ENCODE measurements at regions of chr17 and their contacts with region 1.

Region 1: DNA sequence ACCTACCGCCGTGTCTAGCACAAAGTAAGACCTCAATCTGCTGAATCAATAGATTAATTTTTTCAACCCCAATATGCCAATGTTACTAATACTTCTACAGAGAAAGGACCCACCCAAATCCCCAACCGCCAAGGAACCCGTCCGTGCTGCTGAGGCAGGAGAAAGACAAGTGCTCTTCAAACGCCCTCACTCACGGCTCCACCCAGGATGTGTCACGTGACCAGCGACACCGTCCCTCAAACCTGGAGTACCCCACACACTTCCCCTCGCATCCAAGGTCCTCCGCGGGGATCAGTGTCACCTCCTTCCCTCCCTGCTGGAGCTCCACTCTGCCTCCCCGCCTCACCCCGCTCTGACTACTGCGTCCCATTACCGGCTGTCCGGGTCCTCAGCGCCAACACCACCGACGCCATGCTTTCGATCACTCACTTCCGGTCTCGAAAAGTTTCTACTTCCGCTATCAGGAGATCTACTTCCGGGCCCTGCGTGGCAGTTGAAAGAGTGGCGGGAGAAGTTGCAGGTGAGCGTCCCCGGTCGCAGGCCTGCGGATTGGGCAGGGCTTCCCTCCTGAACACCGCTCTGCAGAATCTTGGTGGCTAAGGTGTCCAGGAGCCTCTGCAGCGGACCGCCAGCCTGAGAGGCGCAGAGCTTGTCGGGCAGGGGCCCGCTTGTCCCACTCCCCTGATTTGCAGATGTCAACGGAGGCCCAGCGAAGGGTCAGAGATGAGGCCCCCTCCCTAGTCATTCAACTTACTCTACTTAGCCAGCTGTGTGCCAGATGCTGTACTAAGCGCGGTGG is at the starts of genes EME1 and MRPL27:
- DNase-seq: peak; percentile 89
- H3K4me3 Mint-ChIP-seq: peak within 1 kb of the TSS; percentile 97
- H3K27ac Mint-ChIP-seq: peak within 1 kb of the TSS; percentile 97
- H3K4me1 Mint-ChIP-seq: peaks cover 39% of the 10 kb centered on the region
- H3K27me3 Mint-ChIP-seq: no peaks in the 10 kb centered on the region
- total RNA-seq, gene EME1: 25.1 to 26.1 TPM
- total RNA-seq, gene MRPL27: 56.5 to 57.5 TPM

Region 2: GRCh38 chr17:50297407-50297865 is 75.5 kb before region 1 on chr17:
- CTCF ChIA-PET with region 1: no interaction called
- POLR2A ChIA-PET with region 1: no interaction called
- DNase-seq: peak; percentile 82
- H3K4me3 Mint-ChIP-seq: no peak overlapping the region
- H3K27ac Mint-ChIP-seq: no peak overlapping the region
- H3K4me1 Mint-ChIP-seq: peaks cover 13% of the 10 kb centered on the region
- H3K27me3 Mint-ChIP-seq: peaks cover 2% of the 10 kb centered on the region

Region 3: GRCh38 chr17:50345432-50346312 is 27.3 kb before region 1 on chr17 and contains the start of gene XYLT2:
- CTCF ChIA-PET with region 1: no interaction called
- POLR2A ChIA-PET with region 1: interaction called, 27 read pairs
- DNase-seq: peak; percentile 93
- H3K4me3 Mint-ChIP-seq: peak within 1 kb of the TSS; percentile 89
- H3K27ac Mint-ChIP-seq: peak within 1 kb of the TSS; percentile 90
- H3K4me1 Mint-ChIP-seq: peaks cover 39% of the 10 kb centered on the region
- H3K27me3 Mint-ChIP-seq: no peaks in the 10 kb centered on the region
- total RNA-seq, gene XYLT2: 26.7 to 29.7 TPM

Region 4: GRCh38 chr17:50425682-50426471 is 52.9 kb after region 1 on chr17 and contains the start of gene ACSF2:
- CTCF ChIA-PET with region 1: no interaction called
- POLR2A ChIA-PET with region 1: interaction called, 16 read pairs
- DNase-seq: peak; percentile 82
- H3K4me3 Mint-ChIP-seq: peak within 1 kb of the TSS; percentile 84
- H3K27ac Mint-ChIP-seq: peak within 1 kb of the TSS; percentile 75
- H3K4me1 Mint-ChIP-seq: peaks cover 33% of the 10 kb centered on the region
- H3K27me3 Mint-ChIP-seq: no peaks in the 10 kb centered on the region
- total RNA-seq, gene ACSF2: 28.7 to 30.7 TPM

Region 5: DNA sequence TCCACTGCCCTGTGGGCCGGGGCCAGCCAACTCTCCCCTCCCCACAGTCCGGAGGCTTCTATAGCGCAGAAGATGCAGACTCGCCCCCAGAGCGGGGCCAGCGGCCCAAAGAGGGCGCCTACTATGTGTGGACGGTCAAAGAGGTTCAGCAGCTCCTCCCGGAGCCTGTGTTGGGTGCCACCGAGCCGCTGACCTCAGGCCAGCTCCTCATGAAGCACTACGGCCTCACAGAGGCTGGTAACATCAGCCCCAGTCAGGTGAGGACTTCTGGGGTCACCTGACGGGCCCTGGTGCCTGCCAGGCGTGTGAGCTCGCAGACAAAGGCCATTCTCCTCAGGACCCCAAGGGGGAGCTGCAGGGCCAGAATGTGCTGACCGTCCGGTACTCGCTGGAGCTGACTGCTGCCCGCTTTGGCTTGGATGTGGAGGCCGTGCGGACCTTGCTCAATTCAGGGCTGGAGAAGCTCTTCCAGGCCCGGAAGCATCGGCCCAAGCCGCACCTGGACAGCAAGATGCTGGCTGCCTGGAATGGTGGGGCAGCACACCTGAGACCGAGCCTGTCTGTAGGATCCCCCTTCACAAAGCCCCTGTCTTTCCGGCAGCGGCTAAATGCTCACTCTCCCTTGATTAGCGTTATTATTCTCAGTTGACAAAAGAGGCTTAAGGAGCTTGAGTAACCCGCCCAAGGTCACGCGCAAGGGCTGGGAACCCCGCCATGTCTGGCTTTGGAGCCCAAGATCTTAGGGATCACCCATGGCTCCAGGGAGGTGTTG is 177.9 kb after region 1 on chr17:
- CTCF ChIA-PET with region 1: no interaction called
- POLR2A ChIA-PET with region 1: no interaction called
- DNase-seq: no peak
- H3K4me3 Mint-ChIP-seq: no peak overlapping the region
- H3K27ac Mint-ChIP-seq: no peak overlapping the region
- H3K4me1 Mint-ChIP-seq: peaks cover 9% of the 10 kb centered on the region
- H3K27me3 Mint-ChIP-seq: peaks cover 5% of the 10 kb centered on the region

Region 6: DNA sequence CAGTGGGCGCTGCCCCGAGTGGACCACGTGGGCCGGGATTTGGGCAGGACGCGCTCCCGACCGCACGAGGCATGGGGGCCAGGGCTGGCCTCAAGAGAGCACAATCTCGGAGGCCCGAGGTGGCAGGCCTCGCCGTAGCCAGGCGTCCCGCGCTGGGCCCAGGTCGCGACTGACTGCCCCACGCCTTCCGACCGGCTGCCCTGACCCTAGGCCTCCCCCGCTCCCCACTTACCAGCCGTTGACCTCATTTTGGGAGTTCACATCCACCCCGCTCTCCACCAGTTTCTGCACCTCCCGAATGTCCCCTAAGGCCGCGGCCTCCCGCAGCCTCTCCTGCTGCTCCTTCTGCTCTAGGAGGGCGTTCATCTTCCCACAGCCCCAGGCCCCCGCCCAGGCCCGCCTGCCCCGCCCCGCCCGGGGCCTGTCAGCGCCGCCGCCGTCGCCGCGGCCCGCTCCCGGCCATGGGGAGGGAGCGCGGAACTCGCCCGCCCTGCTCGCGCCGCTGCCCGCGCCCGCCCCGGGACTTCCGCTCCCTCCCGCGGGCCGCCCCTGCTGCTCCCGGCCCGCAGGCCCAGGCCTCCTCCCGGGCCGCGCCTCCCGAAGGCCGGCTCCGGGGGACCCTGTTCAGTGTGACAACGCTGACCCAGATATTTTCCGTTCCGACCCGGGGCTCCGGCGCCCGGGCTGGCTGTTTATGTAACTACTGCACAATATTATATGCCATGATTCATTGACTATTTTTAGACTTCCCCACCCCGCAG is 334.5 kb after region 1 on chr17 and contains the start of gene ANKRD40:
- CTCF ChIA-PET with region 1: no interaction called
- POLR2A ChIA-PET with region 1: interaction called, 10 read pairs
- DNase-seq: peak; percentile 93
- H3K4me3 Mint-ChIP-seq: peak within 1 kb of the TSS; percentile 83
- H3K27ac Mint-ChIP-seq: peak within 1 kb of the TSS; percentile 96
- H3K4me1 Mint-ChIP-seq: peaks cover 47% of the 10 kb centered on the region
- H3K27me3 Mint-ChIP-seq: peaks cover 2% of the 10 kb centered on the region
- total RNA-seq, gene ANKRD40: 29.8 to 31.1 TPM

Measured in activated CD4-positive, alpha-beta memory T cell treated with anti-CD3 and anti-CD28 coated beads, Interleukin-2, amount 10 ng/mL, durations not matched to agents 7 days and 5 days (primary cell).